ENCODE measurements at regions of chr1 and their contacts with region 1.

Region 1: DNA sequence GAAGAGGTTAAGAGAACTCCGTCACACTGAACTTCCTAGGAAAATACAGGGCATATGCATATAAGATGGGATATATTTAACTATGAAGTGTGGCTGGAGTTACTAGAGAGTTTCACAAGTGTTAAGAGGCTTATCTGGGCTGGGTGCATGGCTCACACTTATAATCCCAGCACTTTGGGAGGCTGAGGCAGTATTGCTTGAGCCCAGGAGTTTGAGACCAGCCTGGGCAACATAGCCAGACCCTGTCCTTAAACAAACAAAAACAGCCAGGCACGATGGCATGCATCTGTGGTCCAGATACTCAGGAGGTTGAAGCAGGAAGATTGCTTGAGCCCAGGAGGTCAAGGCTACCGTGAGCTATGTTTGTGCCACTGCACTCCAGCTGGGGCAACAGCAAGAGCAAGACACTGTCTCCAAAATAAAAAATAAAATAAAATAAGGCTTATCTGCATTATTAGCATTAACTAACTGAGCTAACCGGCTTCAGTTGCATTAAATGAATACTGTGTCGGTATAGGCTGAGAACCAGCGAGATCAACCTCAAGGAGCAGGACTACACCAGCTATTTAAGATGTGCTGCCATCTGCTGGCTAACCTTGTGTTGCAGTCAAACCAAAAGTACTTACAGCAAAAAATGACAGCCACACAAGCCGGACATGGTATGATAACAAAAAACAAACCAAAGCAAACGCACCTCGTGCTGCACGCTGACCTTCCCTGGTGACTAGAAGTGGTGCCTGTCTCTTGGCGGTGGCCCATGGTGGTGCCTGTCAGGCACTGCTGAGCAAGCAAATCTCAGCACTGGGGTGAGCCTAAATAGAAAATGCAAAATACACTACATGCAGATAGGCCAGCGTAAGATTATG is 19.7 kb upstream of the RBBP5 start:
- DNase-seq: peak; percentile 53 to 73 (median 64)
- H3K4me3 ChIP-seq: no peak overlapping the region
- H3K4me3 Mint-ChIP-seq: peak overlapping the region in 5 of 8 donors; percentile 8 to 68 (median 62)
- H3K27ac ChIP-seq: no peak overlapping the region
- H3K27ac Mint-ChIP-seq: peak overlapping the region in 1 of 7 donors; percentile 1
- H3K4me1 ChIP-seq: peaks cover 11% of the 10 kb centered on the region
- H3K4me1 Mint-ChIP-seq: peaks cover 4 to 11% (median 6%) of the 10 kb centered on the region in 4 donors
- H3K27me3 ChIP-seq: no peaks in the 10 kb centered on the region
- H3K27me3 Mint-ChIP-seq: no peaks in the 10 kb centered on the region

Region 2: GRCh38 chr1:205108464-205108863 is 33.0 kb before region 1 on chr1:
- CTCF ChIA-PET with region 1: interaction called, 12 read pairs
- POLR2A ChIA-PET with region 1: no interaction called
- intact Hi-C with region 1: no loop called
- DNase-seq: no peak
- H3K4me3 ChIP-seq: no peak overlapping the region
- H3K4me3 Mint-ChIP-seq: no peak overlapping the region
- H3K27ac ChIP-seq: no peak overlapping the region
- H3K27ac Mint-ChIP-seq: no peak overlapping the region
- H3K4me1 ChIP-seq: no peaks in the 10 kb centered on the region
- H3K4me1 Mint-ChIP-seq: peaks cover 10 to 22% (median 19%) of the 10 kb centered on the region in 4 donors
- H3K27me3 ChIP-seq: no peaks in the 10 kb centered on the region
- H3K27me3 Mint-ChIP-seq: no peaks in the 10 kb centered on the region

Region 3: DNA sequence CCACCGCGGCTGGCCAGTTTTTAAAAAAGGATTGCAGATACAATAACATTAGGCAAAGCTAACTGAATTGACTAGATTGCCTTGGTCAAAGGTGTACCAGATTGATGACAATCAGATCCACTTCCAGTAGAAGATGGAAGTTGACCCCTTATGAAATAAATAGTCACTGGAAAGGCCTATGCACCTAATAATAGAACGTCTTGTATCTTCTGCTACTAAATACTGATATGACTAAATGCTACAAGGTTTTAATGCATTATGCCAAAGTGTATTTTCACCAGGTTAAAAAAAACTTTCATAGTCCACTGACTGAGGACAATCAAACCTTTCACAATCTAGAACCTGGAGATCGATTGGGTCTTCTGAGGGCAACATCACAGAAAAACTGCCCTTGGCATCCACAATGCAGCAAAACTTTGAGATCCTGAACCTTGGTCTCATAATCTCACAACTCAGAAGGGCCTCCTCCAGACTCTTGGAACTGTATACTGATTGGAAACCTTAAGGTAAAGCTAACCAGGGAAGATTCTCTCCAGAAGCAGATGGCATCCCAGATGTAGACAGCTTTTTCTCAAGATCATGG is 11.9 kb before region 1 on chr1:
- CTCF ChIA-PET with region 1: interaction called, 14 read pairs
- POLR2A ChIA-PET with region 1: no interaction called
- intact Hi-C with region 1: no loop called
- DNase-seq: no peak
- H3K4me3 ChIP-seq: no peak overlapping the region
- H3K4me3 Mint-ChIP-seq: no peak overlapping the region
- H3K27ac ChIP-seq: no peak overlapping the region
- H3K27ac Mint-ChIP-seq: no peak overlapping the region
- H3K4me1 ChIP-seq: no peaks in the 10 kb centered on the region
- H3K4me1 Mint-ChIP-seq: no peaks in the 10 kb centered on the region
- H3K27me3 ChIP-seq: no peaks in the 10 kb centered on the region
- H3K27me3 Mint-ChIP-seq: no peaks in the 10 kb centered on the region

Region 4: DNA sequence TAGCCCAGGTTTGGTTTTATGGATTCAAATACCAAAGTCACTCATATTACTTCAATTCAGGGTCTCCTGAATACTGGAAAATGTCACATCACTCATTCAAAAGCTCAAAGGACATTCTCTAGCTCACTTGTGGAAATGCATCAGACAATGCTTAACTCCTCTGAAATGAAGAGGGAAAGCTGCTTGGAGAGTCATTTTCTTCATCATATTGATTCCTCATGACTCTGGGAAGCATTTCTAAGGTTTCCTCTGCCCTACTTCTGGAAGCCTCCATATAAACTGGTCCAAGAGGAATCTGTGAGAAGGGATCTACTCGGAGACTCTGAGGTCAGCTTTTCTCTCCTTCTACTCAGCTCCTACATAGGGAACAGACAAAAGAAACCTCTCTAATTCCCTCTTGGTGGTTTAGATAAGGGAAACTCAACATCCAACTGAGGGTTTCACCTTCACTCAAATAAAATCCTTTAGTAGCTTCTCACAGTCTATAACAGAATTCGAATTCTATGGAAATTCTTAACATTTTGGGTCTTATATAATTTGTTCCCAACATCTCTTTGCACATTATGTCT is 16.7 kb after region 1 on chr1:
- CTCF ChIA-PET with region 1: interaction called, 21 read pairs
- POLR2A ChIA-PET with region 1: no interaction called
- intact Hi-C with region 1: no loop called
- DNase-seq: no peak
- H3K4me3 ChIP-seq: no peak overlapping the region
- H3K4me3 Mint-ChIP-seq: no peak overlapping the region
- H3K27ac ChIP-seq: no peak overlapping the region
- H3K27ac Mint-ChIP-seq: peak overlapping the region in 1 of 7 donors; percentile 2
- H3K4me1 ChIP-seq: no peaks in the 10 kb centered on the region
- H3K4me1 Mint-ChIP-seq: peaks cover 0 to 2% (median 0%) of the 10 kb centered on the region in 4 donors
- H3K27me3 ChIP-seq: no peaks in the 10 kb centered on the region
- H3K27me3 Mint-ChIP-seq: no peaks in the 10 kb centered on the region

Region 5: GRCh38 chr1:205244399-205244798 is 102.9 kb after region 1 on chr1:
- CTCF ChIA-PET with region 1: no interaction called
- POLR2A ChIA-PET with region 1: no interaction called
- intact Hi-C with region 1: no loop called
- DNase-seq: no peak
- H3K4me3 ChIP-seq: no peak overlapping the region
- H3K4me3 Mint-ChIP-seq: no peak overlapping the region
- H3K27ac ChIP-seq: no peak overlapping the region
- H3K27ac Mint-ChIP-seq: no peak overlapping the region
- H3K4me1 ChIP-seq: no peaks in the 10 kb centered on the region
- H3K4me1 Mint-ChIP-seq: no peaks in the 10 kb centered on the region
- H3K27me3 ChIP-seq: no peaks in the 10 kb centered on the region
- H3K27me3 Mint-ChIP-seq: peaks cover 0 to 4% of the 10 kb centered on the region in 2 donors

Region 6: GRCh38 chr1:205410581-205411298 is 269.3 kb after region 1 on chr1:
- CTCF ChIA-PET with region 1: no interaction called
- POLR2A ChIA-PET with region 1: no interaction called
- intact Hi-C with region 1: no loop called
- DNase-seq: no peak
- H3K4me3 ChIP-seq: no peak overlapping the region
- H3K4me3 Mint-ChIP-seq: no peak overlapping the region
- H3K27ac ChIP-seq: no peak overlapping the region
- H3K27ac Mint-ChIP-seq: peak overlapping the region in 1 of 7 donors; percentile 68
- H3K4me1 ChIP-seq: peaks cover 15% of the 10 kb centered on the region
- H3K4me1 Mint-ChIP-seq: peaks cover 12 to 17% (median 14%) of the 10 kb centered on the region in 4 donors
- H3K27me3 ChIP-seq: no peaks in the 10 kb centered on the region
- H3K27me3 Mint-ChIP-seq: peaks cover 0 to 1% of the 10 kb centered on the region in 2 donors